ENCODE measurements at regions of chr7 and their contacts with region 1.

Region 1: GRCh38 chr7:139602143-139602722 is 78.7 kb downstream of the CLEC2L start:
- DNase-seq: peak in 4 of 5 donors; percentile 30 to 38 (median 33)
- H3K4me3 ChIP-seq: no peak overlapping the region
- H3K4me3 Mint-ChIP-seq: no peak overlapping the region
- H3K27ac ChIP-seq: no peak overlapping the region
- H3K27ac Mint-ChIP-seq: no peak overlapping the region
- H3K4me1 ChIP-seq: no peaks in the 10 kb centered on the region
- H3K4me1 Mint-ChIP-seq: no peaks in the 10 kb centered on the region
- H3K27me3 ChIP-seq: no peaks in the 10 kb centered on the region
- H3K27me3 Mint-ChIP-seq: no peaks in the 10 kb centered on the region

Region 2: GRCh38 chr7:139589474-139589873 is 12.8 kb before region 1 on chr7:
- CTCF ChIA-PET with region 1: interaction called, 10 read pairs
- POLR2A ChIA-PET with region 1: no interaction called
- intact Hi-C with region 1: no loop called
- DNase-seq: no peak
- H3K4me3 ChIP-seq: no peak overlapping the region
- H3K4me3 Mint-ChIP-seq: no peak overlapping the region
- H3K27ac ChIP-seq: no peak overlapping the region
- H3K27ac Mint-ChIP-seq: peak overlapping the region in 2 of 7 donors; percentile 22 to 35
- H3K4me1 ChIP-seq: no peaks in the 10 kb centered on the region
- H3K4me1 Mint-ChIP-seq: no peaks in the 10 kb centered on the region
- H3K27me3 ChIP-seq: no peaks in the 10 kb centered on the region
- H3K27me3 Mint-ChIP-seq: no peaks in the 10 kb centered on the region

Region 3: DNA sequence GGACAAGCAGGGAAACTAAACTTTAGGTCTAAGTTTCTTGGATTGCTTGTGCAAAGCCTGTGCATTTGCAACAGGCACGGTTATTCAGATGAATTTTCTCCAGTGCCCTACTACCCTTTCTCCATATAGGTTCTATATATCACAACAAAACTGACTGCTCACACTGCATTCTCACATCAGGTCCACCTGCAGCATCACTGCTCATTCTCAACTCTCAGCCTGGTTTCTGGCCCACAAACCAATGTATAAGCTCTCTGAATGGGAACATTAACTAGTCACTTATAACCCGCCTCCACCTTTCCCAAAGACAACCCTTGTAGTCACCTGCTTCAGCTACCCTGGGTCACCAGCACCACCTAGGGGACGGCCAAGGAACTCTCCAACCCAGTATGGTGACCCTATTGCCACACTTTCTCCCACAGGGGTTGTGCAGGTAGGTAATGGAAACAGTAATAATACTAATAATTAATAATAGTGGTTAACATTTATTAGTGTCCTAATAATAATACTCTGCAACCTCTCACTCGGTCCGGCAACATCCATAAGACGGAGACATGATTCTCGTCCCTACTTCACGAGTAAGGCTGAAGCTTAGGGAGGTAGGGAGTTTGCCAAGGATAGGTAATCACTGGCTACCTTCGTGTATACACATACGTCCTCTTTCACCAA is 18.6 kb after region 1 on chr7:
- CTCF ChIA-PET with region 1: interaction called, 43 read pairs
- POLR2A ChIA-PET with region 1: no interaction called
- intact Hi-C with region 1: no loop called
- DNase-seq: peak in 4 of 5 donors; percentile 47 to 55 (median 52)
- H3K4me3 ChIP-seq: no peak overlapping the region
- H3K4me3 Mint-ChIP-seq: no peak overlapping the region
- H3K27ac ChIP-seq: no peak overlapping the region
- H3K27ac Mint-ChIP-seq: peak overlapping the region in 2 of 7 donors; percentile 16 to 30
- H3K4me1 ChIP-seq: no peaks in the 10 kb centered on the region
- H3K4me1 Mint-ChIP-seq: peaks cover 16 to 23% (median 19%) of the 10 kb centered on the region in 4 donors
- H3K27me3 ChIP-seq: no peaks in the 10 kb centered on the region
- H3K27me3 Mint-ChIP-seq: no peaks in the 10 kb centered on the region

Region 4: GRCh38 chr7:139660317-139661042 is 58.2 kb after region 1 on chr7:
- CTCF ChIA-PET with region 1: no interaction called
- POLR2A ChIA-PET with region 1: no interaction called
- intact Hi-C with region 1: no loop called
- DNase-seq: no peak
- H3K4me3 ChIP-seq: no peak overlapping the region
- H3K4me3 Mint-ChIP-seq: no peak overlapping the region
- H3K27ac ChIP-seq: no peak overlapping the region
- H3K27ac Mint-ChIP-seq: peak overlapping the region in 1 of 7 donors; percentile 11
- H3K4me1 ChIP-seq: no peaks in the 10 kb centered on the region
- H3K4me1 Mint-ChIP-seq: peaks cover 22 to 45% (median 39%) of the 10 kb centered on the region in 4 donors
- H3K27me3 ChIP-seq: no peaks in the 10 kb centered on the region
- H3K27me3 Mint-ChIP-seq: no peaks in the 10 kb centered on the region

Region 5: DNA sequence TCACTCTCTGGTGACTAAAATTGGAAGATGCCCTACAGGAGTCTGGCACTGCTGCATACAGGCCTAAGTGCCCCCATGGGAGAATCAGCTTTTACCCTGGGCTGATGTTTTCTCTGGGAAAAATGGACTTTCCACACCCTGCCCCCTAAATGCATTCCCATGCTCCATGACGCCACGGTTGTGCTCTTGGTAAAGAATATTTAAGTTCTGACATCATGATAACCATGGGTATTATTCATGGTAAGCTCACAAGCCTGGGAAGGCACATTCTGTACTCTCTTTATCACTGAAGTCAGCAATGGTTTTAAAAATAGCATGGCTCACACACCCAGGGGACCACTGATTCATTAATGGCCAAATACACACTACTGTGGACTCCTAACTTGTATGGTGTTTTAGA is 132.2 kb after region 1 on chr7:
- CTCF ChIA-PET with region 1: no interaction called
- POLR2A ChIA-PET with region 1: no interaction called
- intact Hi-C with region 1: no loop called
- DNase-seq: no peak
- H3K4me3 ChIP-seq: no peak overlapping the region
- H3K4me3 Mint-ChIP-seq: no peak overlapping the region
- H3K27ac ChIP-seq: no peak overlapping the region
- H3K27ac Mint-ChIP-seq: peak overlapping the region in 1 of 7 donors; percentile 42
- H3K4me1 ChIP-seq: peaks cover 43% of the 10 kb centered on the region
- H3K4me1 Mint-ChIP-seq: peaks cover 55 to 79% (median 64%) of the 10 kb centered on the region in 4 donors
- H3K27me3 ChIP-seq: no peaks in the 10 kb centered on the region
- H3K27me3 Mint-ChIP-seq: no peaks in the 10 kb centered on the region

Region 6: DNA sequence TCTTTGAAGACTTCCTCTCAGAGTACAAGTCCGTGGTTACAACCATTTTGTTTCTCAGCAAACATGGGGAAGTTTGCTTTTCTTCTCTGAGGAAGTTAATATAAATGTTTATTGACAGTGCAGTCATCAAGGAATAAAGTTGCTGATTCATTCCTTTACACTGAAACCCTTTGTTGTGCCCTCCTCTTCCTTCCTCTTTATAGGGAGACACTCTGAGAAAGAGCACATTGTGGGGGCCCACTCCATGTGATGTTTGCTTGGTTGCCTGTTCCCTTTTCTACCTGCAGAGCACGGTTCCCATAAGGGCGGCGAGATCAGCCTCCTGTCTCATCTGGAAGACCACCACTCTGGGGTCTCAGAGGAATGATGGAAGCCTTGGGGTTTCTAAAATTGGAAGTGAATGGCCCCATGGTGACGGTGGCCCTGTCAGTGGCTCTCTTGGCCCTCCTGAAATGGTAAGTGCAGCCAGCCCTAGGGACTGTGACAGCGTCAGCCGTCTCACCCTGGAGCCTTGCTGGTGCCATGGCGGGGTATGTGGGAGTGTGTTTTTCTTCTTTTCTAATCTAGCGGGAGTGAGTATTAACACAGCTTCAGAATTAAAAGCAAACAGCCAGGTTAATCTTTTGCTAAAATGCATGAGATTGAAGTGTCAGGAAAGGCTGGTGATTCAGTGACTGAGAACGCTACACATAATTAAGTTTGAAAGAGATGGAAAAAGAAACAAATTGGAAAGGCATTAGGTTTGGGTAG is 227.0 kb after region 1 on chr7 and contains the start of gene TBXAS1:
- CTCF ChIA-PET with region 1: interaction called, 3 read pairs
- POLR2A ChIA-PET with region 1: no interaction called
- intact Hi-C with region 1: loop called (anchors 1 kb)
- DNase-seq: peak in 4 of 5 donors; percentile 18 to 35 (median 28)
- H3K4me3 ChIP-seq: peak within 1 kb of the TSS; percentile 7 to 18
- H3K4me3 Mint-ChIP-seq: peak within 1 kb of the TSS; percentile 83 to 90 (median 87)
- H3K27ac ChIP-seq: peak within 1 kb of the TSS; percentile 36
- H3K27ac Mint-ChIP-seq: peak within 1 kb of the TSS; percentile 84 to 97 (median 93)
- H3K4me1 ChIP-seq: peaks cover 28% of the 10 kb centered on the region
- H3K4me1 Mint-ChIP-seq: peaks cover 24 to 42% (median 31%) of the 10 kb centered on the region in 4 donors
- H3K27me3 ChIP-seq: no peaks in the 10 kb centered on the region
- H3K27me3 Mint-ChIP-seq: peaks cover 2 to 3% of the 10 kb centered on the region in 2 donors
- total RNA-seq, gene TBXAS1: 16.6 to 18.0 TPM

Region 7: DNA sequence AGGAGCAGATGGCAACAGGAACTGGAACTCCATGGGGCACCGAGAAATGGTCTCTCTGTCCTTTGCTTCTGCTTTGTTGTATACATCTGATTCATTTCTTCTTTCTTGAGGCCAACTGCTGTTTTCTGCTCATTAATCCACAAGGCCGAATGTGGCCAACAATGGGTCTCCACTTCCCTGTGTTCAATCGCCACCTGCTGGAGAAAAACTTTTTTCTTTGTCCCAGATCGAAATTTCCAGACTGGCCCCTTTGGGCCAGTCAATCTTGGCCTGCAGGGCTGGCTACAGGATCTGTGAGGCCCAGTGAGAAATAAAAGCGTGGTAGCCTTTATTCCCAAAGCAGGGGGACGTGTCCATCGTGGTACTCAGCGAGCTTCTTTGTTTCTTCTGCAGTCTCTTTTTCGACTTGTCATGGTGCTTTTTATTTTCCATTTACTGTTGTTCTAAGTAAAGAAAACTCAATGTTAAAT is 401.7 kb after region 1 on chr7:
- CTCF ChIA-PET with region 1: interaction called, 38 read pairs
- POLR2A ChIA-PET with region 1: no interaction called
- intact Hi-C with region 1: loop called (anchors 1 kb)
- DNase-seq: peak in 4 of 5 donors; percentile 22 to 41 (median 32)
- H3K4me3 ChIP-seq: no peak overlapping the region
- H3K4me3 Mint-ChIP-seq: no peak overlapping the region
- H3K27ac ChIP-seq: no peak overlapping the region
- H3K27ac Mint-ChIP-seq: peak overlapping the region in 3 of 7 donors; percentile 8 to 59 (median 38)
- H3K4me1 ChIP-seq: no peaks in the 10 kb centered on the region
- H3K4me1 Mint-ChIP-seq: peaks cover 0 to 5% (median 3%) of the 10 kb centered on the region in 4 donors
- H3K27me3 ChIP-seq: no peaks in the 10 kb centered on the region
- H3K27me3 Mint-ChIP-seq: no peaks in the 10 kb centered on the region

Measured in CD4-positive, alpha-beta memory T cell (primary cell).